ENCODE measurements at regions of chr5 and their contacts with region 1.

Region 1: DNA sequence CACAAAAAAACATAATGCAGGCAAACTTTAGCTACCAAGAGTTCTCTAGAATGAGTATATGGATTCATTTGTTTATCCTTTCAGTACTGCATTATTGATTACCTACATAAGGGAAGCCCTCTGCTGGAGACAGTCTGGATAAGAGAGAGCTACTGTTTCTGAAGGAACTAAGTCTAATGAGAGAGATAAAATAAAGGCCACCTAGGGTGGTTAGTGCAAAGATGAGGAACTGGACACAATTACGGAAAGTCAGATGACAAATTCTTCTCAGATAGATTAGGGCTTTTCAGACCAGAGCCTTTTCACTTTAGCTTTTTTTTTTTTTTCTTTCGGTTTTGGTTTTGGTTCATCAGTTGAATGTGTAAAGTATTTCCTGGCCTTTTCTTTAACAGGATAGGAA is 31.3 kb downstream of the ISOC1 start:
- DNase-seq: peak; percentile 43
- ATAC-seq: peak; percentile 89
- H3K4me3 ChIP-seq: no peak overlapping the region
- H3K27ac ChIP-seq: peak overlapping the region; percentile 73
- H3K4me1 ChIP-seq: peaks cover 8% of the 10 kb centered on the region
- H3K27me3 ChIP-seq: no peaks in the 10 kb centered on the region
- CTCF ChIP-seq: 0 out of 6 replicates have a peak, but pooled peaks of 1 of the 3 experiments have one; percentile 11
- EP300 ChIP-seq: no peak
- POLR2A ChIP-seq: no peak
- RAD21 ChIP-seq: no peak

Region 2: GRCh38 chr5:129104910-129105455 is 20.8 kb before region 1 on chr5:
- CTCF ChIA-PET with region 1: interaction called, 105 read pairs
- POLR2A ChIA-PET with region 1: no interaction called
- RAD21 ChIA-PET with region 1: interaction called, 7 read pairs
- SMC1A ChIA-PET with region 1: interaction called, 52 read pairs
- in situ Hi-C with region 1: no loop called
- intact Hi-C with region 1: no loop called
- DNase-seq: no peak
- ATAC-seq: no peak
- H3K4me3 ChIP-seq: no peak overlapping the region
- H3K27ac ChIP-seq: no peak overlapping the region
- H3K4me1 ChIP-seq: no peaks in the 10 kb centered on the region
- H3K27me3 ChIP-seq: no peaks in the 10 kb centered on the region
- CTCF ChIP-seq: no peak
- EP300 ChIP-seq: no peak
- POLR2A ChIP-seq: no peak
- RAD21 ChIP-seq: no peak

Region 3: DNA sequence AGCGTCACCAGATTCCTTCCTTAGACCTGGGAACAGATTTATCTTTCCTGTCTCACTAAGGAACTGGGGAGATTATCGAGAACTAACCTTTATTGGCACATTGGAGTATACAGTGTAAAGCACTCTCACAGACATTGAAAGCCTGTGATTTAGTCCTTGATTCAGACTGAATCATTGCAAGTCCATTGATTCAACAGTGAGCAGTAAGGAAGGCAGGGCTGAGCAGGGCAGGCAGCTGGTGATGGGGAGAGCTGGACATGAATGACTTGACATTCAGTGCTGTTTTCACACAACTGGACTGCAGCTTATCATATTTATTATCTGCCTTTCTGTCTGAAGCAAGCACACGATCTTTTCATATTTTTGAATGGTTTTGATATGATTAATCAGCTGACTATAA is 15.1 kb before region 1 on chr5:
- CTCF ChIA-PET with region 1: interaction called, 19 read pairs
- POLR2A ChIA-PET with region 1: interaction called, 5 read pairs
- RAD21 ChIA-PET with region 1: interaction called, 11 read pairs
- SMC1A ChIA-PET with region 1: interaction called, 9 read pairs
- in situ Hi-C with region 1: no loop called
- intact Hi-C with region 1: no loop called
- DNase-seq: no peak
- ATAC-seq: peak; percentile 16; the same call in 1 of the 3 replicates
- H3K4me3 ChIP-seq: no peak overlapping the region
- H3K27ac ChIP-seq: no peak overlapping the region
- H3K4me1 ChIP-seq: no peaks in the 10 kb centered on the region
- H3K27me3 ChIP-seq: no peaks in the 10 kb centered on the region
- CTCF ChIP-seq: no peak
- EP300 ChIP-seq: no peak
- POLR2A ChIP-seq: no peak
- RAD21 ChIP-seq: no peak

Measured in GM12878 (cell line).